Head of caudate nucleus (tissue), 42 donors: ENCODE measurements at regions of chr2 and their contacts with region 1.

Region 1: DNA sequence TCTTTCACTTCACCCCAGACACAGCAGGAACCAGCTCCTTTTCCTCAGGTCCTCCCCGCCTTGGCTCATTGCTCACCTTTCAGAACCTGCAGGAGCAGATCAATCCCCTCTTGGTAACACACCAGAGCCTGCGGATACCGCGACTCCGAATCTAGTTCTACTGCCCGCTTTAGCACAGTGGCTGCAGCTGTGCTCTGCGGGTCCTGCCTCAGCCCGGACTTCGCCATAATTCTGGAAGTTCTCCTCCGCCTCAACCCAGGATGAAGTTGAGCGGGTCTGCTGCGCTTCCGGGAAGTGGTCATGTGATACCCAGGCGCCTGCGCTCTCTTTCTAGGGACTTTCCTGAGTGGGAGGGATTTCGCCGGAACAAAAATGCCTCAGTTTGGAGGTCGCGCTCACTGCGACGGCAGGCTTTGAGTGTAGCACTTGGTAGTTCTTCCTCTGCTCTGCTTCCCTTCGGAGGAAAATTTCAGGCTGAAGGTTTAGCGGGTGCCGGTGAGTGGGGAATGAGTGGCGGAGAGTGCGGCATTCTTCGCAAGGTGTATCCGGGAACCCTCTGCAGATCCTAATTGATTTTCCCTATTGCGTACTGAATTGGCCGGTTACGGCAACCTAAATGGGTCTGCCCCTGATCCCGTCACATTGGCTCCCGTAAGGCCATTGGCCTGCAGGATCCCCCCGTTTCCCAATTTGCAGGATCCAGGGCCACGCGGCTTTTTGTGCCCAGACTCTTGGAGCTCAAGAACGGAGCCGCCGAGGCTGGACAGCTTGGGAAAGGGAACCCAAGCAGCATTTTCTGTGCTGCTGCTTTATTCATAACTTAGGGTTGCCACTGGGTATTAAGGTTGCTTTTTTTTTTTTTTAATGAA is at the starts of genes MITD1 and MRPL30:
- DNase-seq: peak; percentile 87 to 98 (median 95)

Region 2: GRCh38 chr2:99141110-99142108 is 39.6 kb before region 1 on chr2 and contains the start of gene C2orf15:
- intact Hi-C with region 1: loop called (anchors 5 kb)
- DNase-seq: peak; percentile 84 to 98 (median 96)